ENCODE measurements at regions of chr7 and their contacts with region 1.

Region 1: DNA sequence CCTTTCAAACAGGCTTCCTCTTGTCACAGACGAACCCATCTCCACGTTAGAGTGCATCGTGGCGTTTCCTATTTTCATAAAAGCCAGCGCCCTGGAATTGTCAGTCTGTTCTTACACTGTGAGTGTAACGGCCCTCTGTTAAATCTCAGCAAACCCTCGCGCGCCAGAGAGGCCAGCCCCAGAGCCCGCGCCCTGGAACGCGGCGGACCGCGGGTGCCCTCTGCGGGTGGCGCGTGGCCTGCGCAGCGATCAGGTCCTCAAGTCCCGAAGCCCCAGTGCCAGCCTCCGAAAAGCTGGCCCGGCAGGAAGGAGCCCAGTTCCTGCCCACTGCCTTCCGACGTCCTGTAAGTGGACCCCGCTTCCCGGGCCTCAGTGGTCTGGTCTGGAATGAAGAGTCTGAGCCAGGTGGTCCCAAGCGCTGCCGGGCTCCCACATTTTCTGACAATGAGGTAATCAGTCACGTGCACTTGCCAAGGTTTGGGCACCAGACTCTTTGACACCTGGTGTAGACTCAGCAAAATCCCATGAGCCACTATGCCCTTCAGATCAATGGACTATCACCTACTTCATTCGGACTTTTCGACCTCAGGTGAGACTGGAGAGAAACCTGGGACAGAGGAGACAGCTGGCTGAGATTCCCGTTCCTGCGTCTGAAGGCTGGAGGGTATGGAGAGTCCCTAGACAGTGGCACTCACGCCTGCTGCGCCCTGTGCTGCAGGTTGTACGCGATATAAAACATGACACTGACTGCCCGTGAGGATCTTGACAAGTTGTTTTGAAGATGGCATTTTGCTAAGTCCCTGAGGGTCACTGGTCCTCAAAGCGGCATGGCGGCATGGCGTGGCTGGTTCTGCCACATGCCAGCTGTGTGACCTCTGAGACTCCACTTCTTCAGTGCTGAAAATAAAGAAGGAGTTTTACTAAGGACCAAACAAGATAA is 109.4 kb upstream of the LANCL2 start:
- DNase-seq: peak; percentile 86
- H3K4me3 Mint-ChIP-seq: peak overlapping the region; percentile 69
- H3K27ac Mint-ChIP-seq: no peak overlapping the region
- H3K4me1 Mint-ChIP-seq: peaks cover 8% of the 10 kb centered on the region
- H3K27me3 Mint-ChIP-seq: peaks cover 40% of the 10 kb centered on the region

Region 2: GRCh38 chr7:54773472-54774399 is 482.0 kb before region 1 on chr7:
- CTCF ChIA-PET with region 1: interaction called, 245 read pairs
- POLR2A ChIA-PET with region 1: interaction called, 7 read pairs
- intact Hi-C with region 1: loop called (anchors 1 kb)
- DNase-seq: peak; percentile 80
- H3K4me3 Mint-ChIP-seq: peak overlapping the region; percentile 64
- H3K27ac Mint-ChIP-seq: no peak overlapping the region
- H3K4me1 Mint-ChIP-seq: peaks cover 5% of the 10 kb centered on the region
- H3K27me3 Mint-ChIP-seq: peaks cover 9% of the 10 kb centered on the region

Region 3: GRCh38 chr7:55050281-55050680 is 205.5 kb before region 1 on chr7:
- CTCF ChIA-PET with region 1: interaction called, 16 read pairs
- POLR2A ChIA-PET with region 1: no interaction called
- intact Hi-C with region 1: no loop called
- DNase-seq: no peak
- H3K4me3 Mint-ChIP-seq: no peak overlapping the region
- H3K27ac Mint-ChIP-seq: no peak overlapping the region
- H3K4me1 Mint-ChIP-seq: no peaks in the 10 kb centered on the region
- H3K27me3 Mint-ChIP-seq: peaks cover 3% of the 10 kb centered on the region

Region 4: DNA sequence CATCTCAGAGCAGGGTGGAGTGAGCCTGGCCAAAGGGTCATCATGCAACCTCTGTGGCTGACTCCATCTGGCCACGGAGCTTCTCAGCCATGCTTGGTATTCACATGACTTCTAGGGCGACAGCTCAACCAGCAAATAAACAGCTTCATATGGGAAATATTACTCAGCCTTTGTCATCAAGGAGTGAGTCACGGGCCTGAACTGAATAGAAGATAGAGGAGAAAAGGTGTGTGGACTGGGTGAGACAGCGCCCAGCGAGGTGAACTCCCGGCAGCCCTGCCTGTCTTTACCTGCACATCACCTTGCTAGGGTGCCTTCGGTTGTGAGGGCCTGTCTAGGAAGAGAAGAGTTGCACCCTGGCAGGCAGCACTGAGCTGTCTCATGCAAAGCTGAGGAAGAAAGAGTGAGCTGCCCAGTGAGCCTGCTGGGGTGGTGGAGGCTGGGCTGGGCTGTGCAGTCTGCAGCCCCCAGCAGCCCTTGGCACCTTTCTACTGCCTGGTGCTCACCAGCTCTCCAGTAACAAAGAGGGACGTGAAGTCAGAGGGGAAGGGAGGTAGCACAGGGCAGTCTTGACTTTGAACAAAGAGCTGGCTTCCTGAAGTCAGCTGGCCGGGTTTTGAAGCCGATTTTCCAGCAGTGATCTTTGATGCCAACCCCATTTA is 122.7 kb before region 1 on chr7:
- CTCF ChIA-PET with region 1: no interaction called
- POLR2A ChIA-PET with region 1: no interaction called
- intact Hi-C with region 1: loop called (anchors 5 kb)
- DNase-seq: peak; percentile 51
- H3K4me3 Mint-ChIP-seq: no peak overlapping the region
- H3K27ac Mint-ChIP-seq: no peak overlapping the region
- H3K4me1 Mint-ChIP-seq: peaks cover 20% of the 10 kb centered on the region
- H3K27me3 Mint-ChIP-seq: peaks cover 17% of the 10 kb centered on the region

Region 5: GRCh38 chr7:55265836-55266642 is 10.3 kb after region 1 on chr7:
- CTCF ChIA-PET with region 1: interaction called, 27 read pairs
- POLR2A ChIA-PET with region 1: no interaction called
- intact Hi-C with region 1: no loop called
- DNase-seq: no peak
- H3K4me3 Mint-ChIP-seq: no peak overlapping the region
- H3K27ac Mint-ChIP-seq: no peak overlapping the region
- H3K4me1 Mint-ChIP-seq: no peaks in the 10 kb centered on the region
- H3K27me3 Mint-ChIP-seq: peaks cover 2% of the 10 kb centered on the region